Thyroid gland (tissue), 4 donors: ENCODE measurements at regions of chr2 and their contacts with region 1.

Region 1: DNA sequence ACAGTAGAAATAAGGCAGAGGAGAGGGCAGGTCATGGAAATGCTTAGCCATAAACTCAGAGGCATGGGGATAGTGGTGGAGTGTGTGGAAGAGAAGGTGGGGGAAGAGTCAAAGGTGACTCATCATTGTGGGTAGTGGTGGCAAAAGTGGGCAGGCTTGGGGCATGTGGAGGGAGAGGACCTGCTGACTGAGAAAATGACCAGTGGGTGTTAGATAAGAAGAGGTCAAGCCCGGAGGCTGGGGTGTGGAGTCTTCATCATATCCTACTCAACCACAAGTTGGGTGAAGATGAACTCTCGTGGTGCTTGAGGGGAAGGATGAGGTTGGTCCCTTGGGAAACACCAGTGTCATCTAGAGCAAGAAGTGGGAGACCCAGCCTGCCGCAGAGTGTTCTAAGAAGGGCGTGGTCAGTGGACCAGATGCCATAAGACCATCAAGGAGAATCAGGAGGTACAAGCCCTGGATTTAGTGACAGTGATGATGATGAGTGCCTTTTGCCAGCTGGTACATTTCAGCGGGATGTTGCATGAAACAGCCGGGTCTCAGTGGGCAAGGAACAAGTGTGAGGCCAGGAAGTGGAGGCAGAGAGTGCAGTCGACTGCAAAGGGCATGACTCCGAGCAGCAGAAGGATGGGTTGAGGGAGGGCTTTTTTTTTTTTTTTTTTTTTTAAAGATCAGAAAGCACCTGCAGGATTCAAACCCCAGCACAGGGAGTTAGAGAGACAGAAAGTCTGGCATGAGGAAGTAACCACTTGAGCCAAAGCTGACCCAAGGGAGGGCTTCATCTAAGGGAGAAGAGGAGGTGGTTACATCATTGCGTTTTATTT is 122.6 kb upstream of the SPRED2 start:
- DNase-seq: no peak
- H3K4me3 ChIP-seq: no peak overlapping the region
- H3K27ac ChIP-seq: no peak overlapping the region
- H3K4me1 ChIP-seq: no peaks in the 10 kb centered on the region
- H3K27me3 ChIP-seq: no peaks in the 10 kb centered on the region
- CTCF ChIP-seq: no peak
- POLR2A ChIP-seq: no peak

Region 2: GRCh38 chr2:65264821-65265670 is 289.9 kb before region 1 on chr2:
- intact Hi-C with region 1: loop called (anchors 5 kb)
- DNase-seq: no peak
- H3K4me3 ChIP-seq: no peak overlapping the region
- H3K27ac ChIP-seq: no peak overlapping the region
- H3K4me1 ChIP-seq: peaks cover 8 to 10% of the 10 kb centered on the region in 2 donors
- H3K27me3 ChIP-seq: no peaks in the 10 kb centered on the region
- CTCF ChIP-seq: peak; percentile 14 to 78 (median 62)
- POLR2A ChIP-seq: no peak

Region 3: GRCh38 chr2:65620524-65620923 is 65.5 kb after region 1 on chr2:
- intact Hi-C with region 1: no loop called
- DNase-seq: no peak
- H3K4me3 ChIP-seq: no peak overlapping the region
- H3K27ac ChIP-seq: no peak overlapping the region
- H3K4me1 ChIP-seq: no peaks in the 10 kb centered on the region
- H3K27me3 ChIP-seq: no peaks in the 10 kb centered on the region
- CTCF ChIP-seq: no peak
- POLR2A ChIP-seq: no peak

Region 4: GRCh38 chr2:65846989-65847678 is 292.2 kb after region 1 on chr2:
- intact Hi-C with region 1: no loop called
- DNase-seq: no peak
- H3K4me3 ChIP-seq: no peak overlapping the region
- H3K27ac ChIP-seq: no peak overlapping the region
- H3K4me1 ChIP-seq: no peaks in the 10 kb centered on the region
- H3K27me3 ChIP-seq: no peaks in the 10 kb centered on the region
- CTCF ChIP-seq: no peak
- POLR2A ChIP-seq: no peak